A673 (cell line): ENCODE measurements at regions of chr2 and their contacts with region 1.

Region 1: GRCh38 chr2:47554311-47554905 is 151.5 kb downstream of the MSH2 start:
- DNase-seq: no peak
- H3K4me3 ChIP-seq: no peak overlapping the region
- H3K27ac ChIP-seq: no peak overlapping the region
- H3K4me1 ChIP-seq: no peaks in the 10 kb centered on the region
- H3K27me3 ChIP-seq: no peaks in the 10 kb centered on the region
- CTCF ChIP-seq: no peak

Region 2: GRCh38 chr2:46935071-46935470 is 619.3 kb before region 1 on chr2:
- CTCF ChIA-PET with region 1: no interaction called
- POLR2A ChIA-PET with region 1: interaction called, 10 read pairs
- intact Hi-C with region 1: no loop called
- DNase-seq: no peak
- H3K4me3 ChIP-seq: no peak overlapping the region
- H3K27ac ChIP-seq: no peak overlapping the region
- H3K4me1 ChIP-seq: no peaks in the 10 kb centered on the region
- H3K27me3 ChIP-seq: no peaks in the 10 kb centered on the region
- CTCF ChIP-seq: no peak